Motor neuron (in vitro differentiated cells): ENCODE measurements at regions of chr3 and their contacts with region 1.

Region 1: GRCh38 chr3:196502775-196503195 is 783 bp downstream of the RNF168 start:
- ATAC-seq: peak in 7 of 8 experiments; percentile 4 to 29 (median 13)
- H3K4me3 ChIP-seq: peak overlapping the region; percentile 74 to 88 (median 85)
- H3K27ac ChIP-seq: peak overlapping the region; percentile 70 to 83
- H3K4me1 ChIP-seq: peaks cover 6 to 8% of the 10 kb centered on the region in 2 donors

Region 2: GRCh38 chr3:196047391-196048030 is 455.3 kb before region 1 on chr3:
- in situ Hi-C with region 1: loop called in 1 of 9 experiments (anchors 25 kb)
- ATAC-seq: no peak
- H3K4me3 ChIP-seq: no peak overlapping the region
- H3K27ac ChIP-seq: no peak overlapping the region
- H3K4me1 ChIP-seq: peaks cover 0 to 4% of the 10 kb centered on the region in 2 donors

Region 3: GRCh38 chr3:196192036-196192523 is 310.7 kb before region 1 on chr3:
- in situ Hi-C with region 1: no loop called
- ATAC-seq: no peak
- H3K4me3 ChIP-seq: no peak overlapping the region
- H3K27ac ChIP-seq: peak overlapping the region; percentile 7 to 25
- H3K4me1 ChIP-seq: peaks cover 31 to 35% of the 10 kb centered on the region in 2 donors

Region 4: DNA sequence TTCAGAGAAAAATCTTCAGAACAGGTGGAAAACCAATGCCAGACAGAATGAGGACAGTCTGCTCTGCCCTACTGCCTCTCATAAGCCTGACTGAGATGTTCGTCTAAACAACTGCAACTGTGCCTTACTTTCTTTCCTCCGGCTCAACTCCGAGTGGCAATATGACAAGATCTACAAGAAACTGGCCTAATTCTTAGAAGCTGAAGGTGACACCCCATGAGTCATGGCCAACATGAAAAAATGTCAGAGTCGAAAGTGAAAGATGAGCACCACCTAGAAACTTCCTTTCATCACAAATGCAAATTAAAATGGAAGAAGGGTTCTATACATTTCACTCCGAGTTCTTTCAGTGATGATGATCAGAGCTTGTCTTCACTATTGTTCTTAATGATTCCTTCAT is 228.2 kb before region 1 on chr3:
- in situ Hi-C with region 1: loop called in 1 of 9 experiments (anchors 25 kb)
- ATAC-seq: peak in 2 of 8 experiments; percentile 71 to 83
- H3K4me3 ChIP-seq: no peak overlapping the region
- H3K27ac ChIP-seq: no peak overlapping the region
- H3K4me1 ChIP-seq: no peaks in the 10 kb centered on the region

Region 5: GRCh38 chr3:196979545-196979944 is 476.8 kb after region 1 on chr3:
- in situ Hi-C with region 1: no loop called
- ATAC-seq: no peak
- H3K4me3 ChIP-seq: no peak overlapping the region
- H3K27ac ChIP-seq: no peak overlapping the region
- H3K4me1 ChIP-seq: peaks cover 0 to 3% of the 10 kb centered on the region in 2 donors